Activated CD4-positive, alpha-beta T cell treated with anti-CD3 and anti-CD28 coated beads, Interleukin-2, amount 10 ng/mL, durations not matched to agents 24 days and 14 days (primary cell): ENCODE measurements at regions of chr13 and their contacts with region 1.

Region 1: DNA sequence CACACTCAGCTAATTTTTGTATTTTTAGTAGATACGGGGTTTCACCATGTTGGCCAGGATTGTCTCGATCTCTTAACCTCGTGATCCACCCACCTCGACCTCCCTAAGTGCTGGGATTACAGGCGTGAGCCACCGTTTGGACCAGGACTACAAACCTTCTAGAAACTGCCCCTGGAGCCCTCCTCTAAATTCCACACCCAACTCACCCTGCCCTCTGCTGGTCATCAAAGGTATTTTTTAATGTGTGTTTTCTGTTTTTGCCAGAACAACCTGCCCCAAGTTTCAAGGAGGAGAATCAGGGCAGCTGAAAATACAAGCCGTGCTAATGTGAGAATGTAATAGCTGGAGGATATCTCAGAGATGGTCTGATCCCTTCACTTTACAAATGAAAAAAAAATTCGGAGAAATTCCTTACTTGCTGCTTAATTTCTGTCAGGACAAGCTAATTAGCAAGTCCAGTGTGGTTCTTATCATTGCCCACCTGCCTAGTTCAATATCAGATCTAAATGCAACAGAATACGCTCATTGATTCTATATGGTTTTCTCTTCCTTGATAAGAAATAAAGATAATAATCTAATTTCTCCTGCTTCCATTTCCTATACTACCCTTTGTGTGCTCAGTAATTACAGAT is 4.1 kb downstream of the ATP8A2 start:
- DNase-seq: peak; percentile 81
- H3K4me3 Mint-ChIP-seq: no peak overlapping the region
- H3K27ac Mint-ChIP-seq: no peak overlapping the region
- H3K4me1 Mint-ChIP-seq: peaks cover 3% of the 10 kb centered on the region
- H3K27me3 Mint-ChIP-seq: peaks cover 55% of the 10 kb centered on the region

Region 2: DNA sequence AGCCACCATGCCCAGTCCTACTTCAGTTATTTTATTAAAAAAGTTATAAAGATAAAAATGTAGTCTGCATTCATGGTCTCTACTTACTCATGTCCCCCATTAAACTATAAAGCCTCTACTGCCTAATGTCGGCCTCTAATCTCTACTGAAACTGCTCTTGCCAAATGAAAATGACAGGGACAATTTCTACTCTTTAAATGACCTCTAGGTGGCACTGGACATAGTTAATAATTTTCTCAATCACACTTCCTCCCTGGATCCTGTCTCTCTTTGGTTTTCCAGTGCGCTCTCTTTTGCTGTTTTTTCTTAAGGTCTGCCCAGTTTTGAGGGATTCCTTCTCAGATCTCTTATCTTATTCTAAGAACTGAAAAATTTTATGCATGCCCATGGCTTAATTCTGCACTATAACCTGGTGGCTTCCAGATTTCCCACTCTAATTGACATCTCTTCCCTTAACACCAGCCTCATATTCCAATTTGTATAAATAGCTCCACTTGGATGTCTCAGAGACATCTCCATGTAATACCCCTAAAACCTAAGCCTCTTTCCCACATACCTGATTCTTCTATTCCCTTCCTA is 142.8 kb before region 1 on chr13:
- intact Hi-C with region 1: loop called (anchors 1 kb)
- DNase-seq: no peak
- H3K4me3 Mint-ChIP-seq: no peak overlapping the region
- H3K27ac Mint-ChIP-seq: no peak overlapping the region
- H3K4me1 Mint-ChIP-seq: no peaks in the 10 kb centered on the region
- H3K27me3 Mint-ChIP-seq: peaks cover 3% of the 10 kb centered on the region